ENCODE measurements at regions of chrX and their contacts with region 1.

Region 1: GRCh38 chrX:104195489-104196084 is 29.3 kb downstream of the FAM199X start:
- DNase-seq: no peak
- ATAC-seq: peak; percentile 79
- H3K4me3 ChIP-seq: no peak overlapping the region
- H3K27ac ChIP-seq: no peak overlapping the region
- H3K4me1 ChIP-seq: no peaks in the 10 kb centered on the region
- H3K27me3 ChIP-seq: no peaks in the 10 kb centered on the region; a peak in 1 of 4 replicates
- CTCF ChIP-seq: peak; percentile 62 to 63 (median 62)
- EP300 ChIP-seq: no peak
- POLR2A ChIP-seq: no peak
- RAD21 ChIP-seq: peak; percentile 61

Region 2: DNA sequence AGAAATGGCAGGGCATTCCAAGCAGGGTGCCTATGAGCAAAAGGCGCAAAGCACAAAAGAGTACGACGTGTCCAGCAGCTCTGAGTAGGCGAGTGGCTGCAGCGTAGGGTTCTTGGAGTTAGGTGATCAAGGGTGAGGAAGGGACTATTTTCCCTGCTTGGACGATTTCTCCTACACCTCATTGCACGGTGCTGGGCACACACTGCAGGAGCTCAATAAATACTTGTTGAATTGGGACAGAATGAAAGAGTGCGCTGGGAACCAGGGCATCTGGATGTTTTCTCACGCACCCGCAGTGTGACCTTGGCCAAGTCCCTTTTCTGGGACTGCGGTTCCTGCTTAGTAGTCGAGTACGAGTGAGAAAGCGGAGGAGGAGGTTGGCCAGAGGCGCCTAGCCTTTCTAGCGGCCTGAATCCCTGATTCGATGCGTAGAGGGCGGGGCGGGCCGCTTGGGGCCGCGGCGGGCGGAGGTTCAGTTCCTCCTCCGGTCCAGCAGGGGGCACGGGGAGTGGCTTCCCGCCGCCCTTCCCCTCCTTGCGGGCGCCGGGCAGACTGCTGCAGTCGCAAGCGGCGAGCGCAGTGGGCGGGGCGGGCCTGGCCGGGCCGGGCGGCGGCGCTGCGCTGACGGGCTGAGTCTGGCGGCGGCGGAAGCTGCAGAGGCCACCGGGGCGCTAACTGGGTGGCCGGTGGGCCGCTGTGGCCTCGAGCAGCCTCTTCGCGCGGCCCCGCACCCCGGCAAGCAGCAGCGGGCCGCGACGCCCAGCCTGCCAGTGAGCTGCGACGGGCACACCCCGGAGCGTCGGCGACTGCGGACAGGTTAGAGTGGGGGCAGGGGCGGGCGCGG is 29.5 kb before region 1 on chrX and contains the start of gene FAM199X:
- CTCF ChIA-PET with region 1: interaction called, 12 read pairs
- POLR2A ChIA-PET with region 1: no interaction called
- RAD21 ChIA-PET with region 1: interaction called, 4 read pairs
- SMC1A ChIA-PET with region 1: no interaction called
- in situ Hi-C with region 1: no loop called
- intact Hi-C with region 1: no loop called
- DNase-seq: peak; percentile 33
- ATAC-seq: peak; percentile 95
- H3K4me3 ChIP-seq: peak within 1 kb of the TSS; percentile 73
- H3K27ac ChIP-seq: peak within 1 kb of the TSS; percentile 70
- H3K4me1 ChIP-seq: peaks cover 4% of the 10 kb centered on the region
- H3K27me3 ChIP-seq: no peaks in the 10 kb centered on the region
- CTCF ChIP-seq: peak; percentile 48 to 62 (median 53)
- EP300 ChIP-seq: no peak
- POLR2A ChIP-seq: peak; percentile 75
- RAD21 ChIP-seq: no peak
- polyA plus RNA-seq, gene FAM199X: 2.4 to 2.7 TPM

Region 3: DNA sequence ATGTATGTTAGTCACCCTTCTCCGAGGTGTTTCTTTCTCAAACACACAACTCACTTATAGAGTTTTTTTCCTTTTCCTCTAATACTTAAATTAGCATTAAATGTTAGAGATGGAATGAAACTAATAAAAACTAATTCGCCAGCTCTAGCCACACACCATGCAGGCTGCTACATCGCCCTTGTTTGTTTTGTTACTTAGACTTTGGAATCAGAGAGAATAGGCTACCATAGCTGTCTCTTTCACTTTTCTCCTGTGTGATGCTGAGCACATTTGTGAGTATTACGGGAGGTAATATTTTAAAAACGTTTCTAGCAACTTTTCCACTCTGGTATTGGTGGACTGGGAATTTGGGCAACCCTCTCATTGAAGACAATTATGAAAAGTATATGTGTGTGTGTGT is 15.6 kb after region 1 on chrX:
- CTCF ChIA-PET with region 1: interaction called, 12 read pairs
- POLR2A ChIA-PET with region 1: no interaction called
- RAD21 ChIA-PET with region 1: no interaction called
- SMC1A ChIA-PET with region 1: no interaction called
- in situ Hi-C with region 1: no loop called
- intact Hi-C with region 1: no loop called
- DNase-seq: no peak
- ATAC-seq: no peak
- H3K4me3 ChIP-seq: no peak overlapping the region
- H3K27ac ChIP-seq: no peak overlapping the region
- H3K4me1 ChIP-seq: no peaks in the 10 kb centered on the region
- H3K27me3 ChIP-seq: no peaks in the 10 kb centered on the region
- CTCF ChIP-seq: no peak
- EP300 ChIP-seq: no peak
- POLR2A ChIP-seq: no peak
- RAD21 ChIP-seq: no peak

Region 4: GRCh38 chrX:104270920-104271512 is 75.4 kb after region 1 on chrX:
- CTCF ChIA-PET with region 1: interaction called, 18 read pairs
- POLR2A ChIA-PET with region 1: no interaction called
- RAD21 ChIA-PET with region 1: interaction called, 5 read pairs
- SMC1A ChIA-PET with region 1: interaction called, 4 read pairs
- in situ Hi-C with region 1: no loop called
- intact Hi-C with region 1: loop called (anchors 1 kb)
- DNase-seq: no peak
- ATAC-seq: peak; percentile 72
- H3K4me3 ChIP-seq: no peak overlapping the region
- H3K27ac ChIP-seq: no peak overlapping the region
- H3K4me1 ChIP-seq: no peaks in the 10 kb centered on the region
- H3K27me3 ChIP-seq: no peaks in the 10 kb centered on the region
- CTCF ChIP-seq: peak; percentile 61 to 63 (median 63)
- EP300 ChIP-seq: no peak
- POLR2A ChIP-seq: no peak
- RAD21 ChIP-seq: peak; percentile 63

Region 5: GRCh38 chrX:104343428-104344129 is 148.0 kb after region 1 on chrX:
- CTCF ChIA-PET with region 1: interaction called, 6 read pairs
- POLR2A ChIA-PET with region 1: no interaction called
- RAD21 ChIA-PET with region 1: interaction called, 3 read pairs
- SMC1A ChIA-PET with region 1: no interaction called
- in situ Hi-C with region 1: no loop called
- intact Hi-C with region 1: loop called (anchors 2 kb)
- DNase-seq: peak; percentile 7
- ATAC-seq: peak; percentile 95
- H3K4me3 ChIP-seq: no peak overlapping the region
- H3K27ac ChIP-seq: no peak overlapping the region
- H3K4me1 ChIP-seq: no peaks in the 10 kb centered on the region
- H3K27me3 ChIP-seq: no peaks in the 10 kb centered on the region
- CTCF ChIP-seq: peak; percentile 42 to 57 (median 52); a peak in 5 of 6 replicates
- EP300 ChIP-seq: no peak
- POLR2A ChIP-seq: no peak
- RAD21 ChIP-seq: 0 out of 2 replicates have a peak, but pooled peaks have one; percentile 12

Measured in GM12878 (cell line).